Activated CD4-positive, alpha-beta T cell treated with anti-CD3 and anti-CD28 coated beads for 36 hours (primary cell): ENCODE measurements at regions of chr17 and their contacts with region 1.

Region 1: DNA sequence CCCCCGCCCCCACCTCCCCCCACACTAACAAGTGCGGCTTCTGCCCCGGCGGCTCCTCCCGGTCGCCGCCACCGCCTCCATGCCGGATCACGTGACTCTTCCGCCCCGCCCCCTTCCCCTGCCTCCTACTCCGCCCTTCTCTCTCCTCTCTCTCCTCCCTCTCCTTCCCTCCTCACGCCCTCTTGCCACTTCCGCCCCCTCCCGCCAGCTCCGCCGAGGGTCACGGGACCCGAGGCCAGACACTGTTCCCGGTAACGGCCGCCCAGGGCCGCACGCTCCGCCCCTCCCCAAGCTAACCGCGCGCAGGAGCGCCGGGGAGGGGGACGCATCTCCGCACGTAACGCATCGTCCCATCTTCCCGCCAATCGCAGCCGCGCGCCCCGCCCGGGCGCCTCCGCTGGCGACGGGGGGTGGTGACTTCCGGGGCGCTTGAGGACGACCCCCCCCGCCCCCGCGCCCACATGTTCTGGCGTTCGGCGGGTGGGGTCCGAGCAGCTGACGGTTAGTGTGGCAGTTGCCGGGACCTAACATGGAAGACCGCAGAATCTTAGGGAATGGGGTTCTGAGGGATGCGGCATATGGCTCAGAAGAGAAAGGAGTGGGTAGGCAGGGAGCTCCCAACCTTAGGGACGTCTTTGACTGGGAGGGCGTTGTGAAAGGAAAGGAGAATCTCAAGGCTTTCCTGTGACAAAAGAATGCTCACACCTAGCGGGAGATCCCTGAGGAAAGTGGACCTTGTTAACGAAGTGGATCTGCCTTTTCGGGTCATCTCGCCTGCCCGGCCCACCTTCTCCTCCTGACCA is at the start of gene USP32:
- DNase-seq: peak; percentile 99
- ATAC-seq: peak; percentile 93
- H3K4me3 Mint-ChIP-seq: peak within 1 kb of the TSS; percentile 77
- H3K27ac Mint-ChIP-seq: peak within 1 kb of the TSS; percentile 99
- H3K4me1 Mint-ChIP-seq: peaks cover 41% of the 10 kb centered on the region
- H3K27me3 Mint-ChIP-seq: no peaks in the 10 kb centered on the region
- total RNA-seq, gene USP32: 32.3 to 33.1 TPM

Region 2: DNA sequence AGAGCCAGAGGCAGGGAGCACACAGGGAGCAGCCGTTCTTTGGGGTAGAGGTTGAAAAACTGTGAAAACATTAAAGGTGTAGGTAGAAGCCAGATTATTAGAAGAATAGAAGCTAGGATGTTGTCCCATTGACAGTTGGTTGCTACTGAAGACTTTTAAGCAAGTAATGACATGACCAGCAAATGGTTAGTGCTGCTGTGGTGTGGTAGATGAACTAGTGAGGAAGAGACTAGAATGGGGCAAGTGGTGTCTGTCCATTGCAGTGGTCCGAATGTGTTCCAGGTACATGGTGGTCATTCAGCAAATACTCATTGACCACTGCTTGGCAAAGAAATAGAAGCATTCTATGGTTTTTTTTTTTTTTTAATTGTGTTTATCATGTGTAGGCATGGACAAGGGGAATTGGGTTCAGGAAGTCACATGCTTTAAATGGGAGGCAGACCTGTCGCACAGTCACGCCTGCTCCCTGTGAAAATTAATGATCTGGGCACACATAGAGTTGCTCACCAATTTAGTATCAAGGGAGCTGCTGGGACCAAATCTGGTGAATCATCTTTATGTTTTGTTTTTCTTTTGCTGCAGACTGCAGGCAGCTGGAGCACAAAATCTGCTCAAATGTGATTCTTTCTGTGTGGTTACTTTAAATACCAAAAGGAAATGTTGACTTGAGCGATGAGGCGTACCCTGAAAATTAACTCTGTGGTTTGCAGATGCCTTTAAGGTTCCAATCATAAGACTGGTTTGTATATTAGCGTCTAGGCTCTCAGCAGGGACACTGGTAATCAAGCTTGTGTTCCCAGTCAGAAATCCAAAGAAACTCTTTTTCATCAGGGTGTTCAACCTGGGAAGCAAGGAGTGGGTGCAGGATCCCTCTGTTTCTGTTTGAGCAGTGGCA is 1030.1 kb before region 1 on chr17:
- CTCF ChIA-PET with region 1: no interaction called
- POLR2A ChIA-PET with region 1: no interaction called
- intact Hi-C with region 1: loop called in 1 of 2 experiments (anchors 10 kb)
- DNase-seq: peak; percentile 55
- ATAC-seq: peak; percentile 73
- H3K4me3 Mint-ChIP-seq: peak overlapping the region; percentile 60
- H3K27ac Mint-ChIP-seq: peak overlapping the region; percentile 96
- H3K4me1 Mint-ChIP-seq: peaks cover 78% of the 10 kb centered on the region
- H3K27me3 Mint-ChIP-seq: no peaks in the 10 kb centered on the region

Region 3: DNA sequence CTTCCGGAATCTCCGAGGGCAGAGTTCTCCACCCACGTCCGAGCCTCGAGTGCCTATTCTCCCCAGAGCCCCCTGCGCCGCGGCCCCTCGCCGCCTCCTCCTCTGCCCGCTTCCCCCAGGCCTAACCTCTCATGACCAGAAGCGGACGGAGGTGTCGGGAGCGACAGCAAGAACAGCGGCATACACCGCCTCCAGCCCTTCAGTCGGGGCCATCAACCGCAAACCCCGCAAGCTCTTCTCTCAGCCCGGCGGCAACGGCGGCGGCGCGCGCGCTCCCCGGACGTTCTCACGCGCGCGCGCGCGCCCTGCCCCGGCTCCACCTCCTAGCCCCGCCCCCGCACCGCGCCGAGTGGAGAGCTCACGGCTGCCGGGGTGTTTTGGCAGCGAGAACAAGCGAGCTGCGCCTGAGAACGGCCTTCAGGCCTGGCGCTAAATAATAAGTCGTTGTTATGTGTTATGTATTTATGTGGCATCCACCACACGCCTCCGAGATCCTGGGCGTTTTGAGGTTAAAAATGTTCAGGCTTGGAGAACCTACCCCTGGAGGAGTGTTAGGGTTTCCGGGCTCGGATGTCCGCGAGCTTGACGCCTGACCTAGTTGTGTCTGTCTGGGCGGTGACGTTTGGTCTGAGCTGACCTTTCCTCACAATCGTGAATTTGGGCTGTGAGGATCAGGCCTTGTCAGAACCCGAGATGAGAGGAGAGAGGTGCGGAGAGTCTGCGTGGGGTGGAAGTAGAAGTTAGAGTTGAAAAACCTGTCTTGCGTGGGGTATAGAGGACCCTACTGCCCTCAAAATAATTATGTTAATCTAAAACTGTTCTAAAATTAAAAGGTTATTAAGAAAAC is 427.5 kb before region 1 on chr17 and contains the start of gene RNFT1:
- CTCF ChIA-PET with region 1: no interaction called
- POLR2A ChIA-PET with region 1: no interaction called
- intact Hi-C with region 1: loop called in 1 of 2 experiments (anchors 1 kb)
- DNase-seq: peak; percentile 97
- ATAC-seq: peak; percentile 84
- H3K4me3 Mint-ChIP-seq: peak within 1 kb of the TSS; percentile 78
- H3K27ac Mint-ChIP-seq: peak within 1 kb of the TSS; percentile 96
- H3K4me1 Mint-ChIP-seq: peaks cover 19% of the 10 kb centered on the region
- H3K27me3 Mint-ChIP-seq: no peaks in the 10 kb centered on the region
- total RNA-seq, gene RNFT1: 32.8 to 36.9 TPM

Region 4: GRCh38 chr17:60067854-60068253 is 324.4 kb before region 1 on chr17:
- CTCF ChIA-PET with region 1: no interaction called
- POLR2A ChIA-PET with region 1: no interaction called
- intact Hi-C with region 1: no loop called
- DNase-seq: no peak
- ATAC-seq: no peak
- H3K4me3 Mint-ChIP-seq: no peak overlapping the region
- H3K27ac Mint-ChIP-seq: no peak overlapping the region
- H3K4me1 Mint-ChIP-seq: no peaks in the 10 kb centered on the region
- H3K27me3 Mint-ChIP-seq: no peaks in the 10 kb centered on the region

Region 5: GRCh38 chr17:60142872-60143499 is 249.3 kb before region 1 on chr17:
- CTCF ChIA-PET with region 1: no interaction called
- POLR2A ChIA-PET with region 1: no interaction called
- intact Hi-C with region 1: loop called in 1 of 2 experiments (anchors 2 kb)
- DNase-seq: peak; percentile 92
- ATAC-seq: peak; percentile 80
- H3K4me3 Mint-ChIP-seq: no peak overlapping the region
- H3K27ac Mint-ChIP-seq: no peak overlapping the region
- H3K4me1 Mint-ChIP-seq: peaks cover 18% of the 10 kb centered on the region
- H3K27me3 Mint-ChIP-seq: peaks cover 75% of the 10 kb centered on the region

Region 6: GRCh38 chr17:60525685-60526514 is 133.7 kb after region 1 on chr17 and contains the start of gene APPBP2:
- CTCF ChIA-PET with region 1: no interaction called
- POLR2A ChIA-PET with region 1: no interaction called
- intact Hi-C with region 1: loop called in 1 of 2 experiments (anchors 1 kb)
- DNase-seq: peak; percentile 80
- ATAC-seq: peak; percentile 82
- H3K4me3 Mint-ChIP-seq: peak within 1 kb of the TSS; percentile 96
- H3K27ac Mint-ChIP-seq: peak within 1 kb of the TSS; percentile 97
- H3K4me1 Mint-ChIP-seq: peaks cover 30% of the 10 kb centered on the region
- H3K27me3 Mint-ChIP-seq: no peaks in the 10 kb centered on the region
- total RNA-seq, gene APPBP2: 21.4 to 28.8 TPM